Gastrocnemius medialis (tissue), 4 donors: ENCODE measurements at regions of chr5 and their contacts with region 1.

Region 1: GRCh38 chr5:40688127-40688761 is 8.5 kb downstream of the PTGER4 start:
- DNase-seq: peak; percentile 71 to 75
- ATAC-seq: peak; percentile 89 to 91
- H3K4me3 ChIP-seq: peak overlapping the region in 2 of 4 donors; percentile 18 to 78
- H3K27ac ChIP-seq: peak overlapping the region; percentile 32 to 87 (median 62)
- H3K4me1 ChIP-seq: peaks cover 14 to 24% of the 10 kb centered on the region in 2 donors
- H3K27me3 ChIP-seq: peaks cover 0 to 11% (median 7%) of the 10 kb centered on the region in 3 donors
- CTCF ChIP-seq: peak; percentile 82 to 90 (median 87)
- POLR2A ChIP-seq: no peak

Region 2: DNA sequence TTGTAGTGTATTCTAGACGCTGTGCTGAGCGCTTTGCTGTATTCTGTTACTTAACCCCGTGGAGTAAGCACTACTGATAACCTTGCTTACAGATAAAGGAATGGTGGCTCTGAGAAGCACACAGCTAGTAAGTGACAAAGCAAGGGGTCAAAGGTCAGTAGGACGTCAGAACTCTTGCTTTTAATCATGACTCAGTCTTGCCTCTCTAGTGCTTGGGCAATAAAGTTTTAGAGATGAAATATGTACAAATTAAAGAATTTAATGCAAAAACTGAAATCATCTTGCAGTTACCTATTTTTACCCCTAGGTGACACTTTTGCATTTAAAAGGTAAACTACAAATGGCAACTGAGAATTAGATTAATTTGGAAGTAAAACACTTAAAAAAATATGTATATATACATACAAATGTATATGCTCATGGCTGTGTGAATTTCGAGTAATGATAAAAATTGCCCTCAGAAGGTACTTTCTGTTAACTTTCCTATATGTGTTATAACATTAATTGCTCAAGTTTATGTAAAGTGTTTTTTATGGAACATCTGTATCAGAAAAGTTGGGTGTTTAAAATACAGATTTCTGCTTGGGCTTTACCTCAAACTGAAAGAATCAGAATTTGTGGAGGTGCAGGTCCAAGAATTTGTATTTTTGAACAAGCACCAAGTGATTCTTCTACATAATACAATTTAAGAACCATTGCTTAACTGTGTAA is 1088.4 kb before region 1 on chr5:
- in situ Hi-C with region 1: loop called in 1 of 4 experiments (anchors 25 kb)
- intact Hi-C with region 1: no loop called
- DNase-seq: no peak
- ATAC-seq: no peak
- H3K4me3 ChIP-seq: no peak overlapping the region
- H3K27ac ChIP-seq: no peak overlapping the region
- H3K4me1 ChIP-seq: no peaks in the 10 kb centered on the region
- H3K27me3 ChIP-seq: no peaks in the 10 kb centered on the region
- CTCF ChIP-seq: peak in 3 of 5 experiments; percentile 31 to 50 (median 45)
- POLR2A ChIP-seq: no peak

Region 3: GRCh38 chr5:39948867-39949468 is 739.3 kb before region 1 on chr5:
- in situ Hi-C with region 1: loop called in 3 of 4 experiments (anchors 10 kb)
- intact Hi-C with region 1: loop called (anchors 5 kb)
- DNase-seq: peak; percentile 13 to 14
- ATAC-seq: peak in 1 of 2 donors; percentile 55
- H3K4me3 ChIP-seq: no peak overlapping the region
- H3K27ac ChIP-seq: no peak overlapping the region
- H3K4me1 ChIP-seq: no peaks in the 10 kb centered on the region
- H3K27me3 ChIP-seq: no peaks in the 10 kb centered on the region
- CTCF ChIP-seq: peak in 4 of 5 experiments; percentile 39 to 58 (median 46)
- POLR2A ChIP-seq: no peak

Region 4: DNA sequence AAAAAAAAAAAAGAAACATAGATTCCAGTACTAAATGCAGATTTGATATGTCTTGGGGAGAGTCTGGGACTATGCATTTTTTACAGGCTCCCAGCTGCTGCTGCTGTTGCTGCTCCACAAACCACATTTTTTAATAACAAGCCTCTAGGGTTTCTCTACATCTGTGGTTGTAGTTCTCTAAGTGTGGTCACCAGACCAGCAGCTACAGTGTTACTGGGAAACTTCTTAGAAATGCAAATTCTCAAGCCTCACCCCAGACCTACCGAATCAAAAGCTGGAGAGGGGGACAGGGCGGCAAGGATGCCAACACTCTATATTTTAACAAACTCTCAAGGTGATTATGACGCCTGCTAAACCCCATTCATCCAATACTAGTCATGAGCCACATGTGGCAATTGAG is 302.0 kb before region 1 on chr5:
- in situ Hi-C with region 1: loop called in 1 of 4 experiments (anchors 25 kb)
- intact Hi-C with region 1: no loop called
- DNase-seq: no peak
- ATAC-seq: no peak
- H3K4me3 ChIP-seq: no peak overlapping the region
- H3K27ac ChIP-seq: no peak overlapping the region
- H3K4me1 ChIP-seq: peaks cover 2% of the 10 kb centered on the region in 2 donors
- H3K27me3 ChIP-seq: no peaks in the 10 kb centered on the region
- CTCF ChIP-seq: no peak
- POLR2A ChIP-seq: no peak